ENCODE measurements at regions of chr3 and their contacts with region 1.

Region 1: GRCh38 chr3:58924578-58924977 is 125.2 kb downstream of the CFAP20DC start:
- DNase-seq: peak; percentile 61
- H3K4me3 ChIP-seq: no peak overlapping the region
- H3K27ac ChIP-seq: no peak overlapping the region
- H3K4me1 ChIP-seq: no peaks in the 10 kb centered on the region
- H3K27me3 ChIP-seq: no peaks in the 10 kb centered on the region
- CTCF ChIP-seq: no peak

Region 2: DNA sequence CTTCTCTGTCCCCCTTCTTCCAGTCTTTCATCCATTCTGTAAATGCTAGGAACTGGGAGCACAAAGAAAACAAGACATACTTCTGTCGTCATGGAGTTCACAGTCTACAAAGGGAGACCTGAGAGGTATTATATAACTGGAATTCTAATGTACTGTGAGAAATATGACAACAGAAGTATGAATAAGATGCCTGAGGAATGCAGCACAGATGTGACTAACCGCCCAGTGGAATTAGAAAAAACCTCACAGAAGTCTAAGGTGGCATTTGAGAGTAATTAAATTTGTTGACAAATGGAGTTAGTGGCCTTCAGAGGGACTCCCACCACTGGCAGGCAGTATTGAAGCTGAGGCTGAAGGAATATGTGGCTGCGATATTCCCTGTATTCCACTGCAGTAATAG is 89.5 kb before region 1 on chr3:
- CTCF ChIA-PET with region 1: no interaction called
- dilution Hi-C with region 1: no loop called
- in situ Hi-C with region 1: no loop called
- intact Hi-C with region 1: loop called (anchors 5 kb)
- DNase-seq: peak; percentile 52
- H3K4me3 ChIP-seq: no peak overlapping the region
- H3K27ac ChIP-seq: peak overlapping the region; percentile 13
- H3K4me1 ChIP-seq: peaks cover 11% of the 10 kb centered on the region
- H3K27me3 ChIP-seq: no peaks in the 10 kb centered on the region
- CTCF ChIP-seq: no peak

Region 3: DNA sequence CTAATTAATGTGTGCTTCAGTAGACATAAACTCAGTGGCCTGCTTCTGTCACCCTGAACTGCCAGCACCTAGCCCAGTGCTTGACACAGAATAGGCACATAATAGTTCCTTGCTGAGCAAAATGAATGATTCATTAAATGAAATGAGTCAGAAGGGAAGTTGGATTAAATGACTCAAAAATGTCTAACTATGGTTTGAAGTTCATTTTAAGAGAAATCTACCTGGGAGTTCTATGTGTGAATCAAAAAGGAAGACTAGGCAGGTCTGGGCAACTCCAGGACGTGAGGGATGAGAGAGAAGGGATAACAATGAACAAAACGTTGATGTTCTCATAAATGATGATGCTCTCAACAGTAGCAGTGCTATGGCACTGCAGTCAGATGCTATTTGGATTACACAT is 49.8 kb before region 1 on chr3:
- CTCF ChIA-PET with region 1: no interaction called
- dilution Hi-C with region 1: no loop called
- in situ Hi-C with region 1: no loop called
- intact Hi-C with region 1: loop called (anchors 5 kb)
- DNase-seq: peak; percentile 98
- H3K4me3 ChIP-seq: no peak overlapping the region
- H3K27ac ChIP-seq: peak overlapping the region; percentile 96
- H3K4me1 ChIP-seq: peaks cover 52% of the 10 kb centered on the region
- H3K27me3 ChIP-seq: no peaks in the 10 kb centered on the region
- CTCF ChIP-seq: no peak

Region 4: DNA sequence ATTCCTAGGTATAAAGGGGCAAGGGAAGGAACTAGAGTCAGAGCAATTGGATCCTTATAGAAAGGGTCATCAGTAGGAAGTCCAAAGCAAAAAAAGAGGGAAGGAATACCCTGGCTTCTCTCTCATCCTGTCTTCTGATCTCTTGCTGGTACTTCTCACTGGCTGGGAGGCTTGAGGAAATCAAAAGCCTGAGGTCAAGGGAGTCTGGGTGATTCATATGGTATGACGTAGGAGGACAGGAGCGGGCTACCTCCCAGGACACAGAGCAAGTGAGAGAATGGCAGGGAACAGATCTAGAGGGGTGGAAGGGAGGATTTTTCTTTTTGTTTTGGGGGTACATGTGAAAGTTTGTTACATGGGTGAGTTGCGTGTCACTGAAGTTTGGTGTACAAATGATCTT is 49.2 kb after region 1 on chr3:
- CTCF ChIA-PET with region 1: no interaction called
- dilution Hi-C with region 1: no loop called
- in situ Hi-C with region 1: no loop called
- intact Hi-C with region 1: no loop called
- DNase-seq: no peak
- H3K4me3 ChIP-seq: no peak overlapping the region
- H3K27ac ChIP-seq: no peak overlapping the region
- H3K4me1 ChIP-seq: no peaks in the 10 kb centered on the region
- H3K27me3 ChIP-seq: no peaks in the 10 kb centered on the region
- CTCF ChIP-seq: no peak